ENCODE measurements at regions of chr7 and their contacts with region 1.

Region 1: DNA sequence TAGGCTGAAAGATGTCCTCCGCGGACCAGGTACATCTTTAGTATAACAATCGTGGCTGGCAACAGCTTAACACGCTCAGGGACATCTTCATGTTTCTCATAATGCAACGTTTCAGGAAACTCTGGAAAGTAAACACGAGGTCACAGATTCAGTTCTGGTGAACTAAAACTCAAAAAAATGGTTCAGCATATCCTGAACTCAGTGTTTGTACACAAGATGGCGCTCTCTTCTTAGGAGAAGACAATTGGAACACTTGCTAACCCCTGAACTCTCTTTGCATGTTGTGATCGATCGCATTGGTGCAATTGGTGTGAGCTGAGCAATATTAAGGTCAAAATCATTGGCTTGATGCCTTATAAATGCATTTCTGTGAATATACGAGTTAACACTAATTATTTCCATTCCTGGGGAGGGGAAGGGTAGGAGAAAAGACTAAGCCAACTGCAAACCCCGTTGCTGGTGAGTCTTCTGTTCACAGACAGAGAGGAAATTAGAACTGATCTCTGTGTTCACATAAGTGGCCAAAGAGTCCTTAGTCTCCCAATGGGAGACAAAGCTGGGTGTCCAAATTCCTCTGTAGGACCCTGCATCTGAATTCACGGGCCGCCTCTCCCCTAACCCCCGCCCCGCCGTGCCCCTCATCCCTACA is 52.6 kb upstream of the FAM180A start:
- DNase-seq: peak; percentile 62 to 66
- H3K4me3 ChIP-seq: no peak overlapping the region
- H3K4me1 ChIP-seq: no peaks in the 10 kb centered on the region
- H3K27me3 ChIP-seq: no peaks in the 10 kb centered on the region

Region 2: GRCh38 chr7:135930565-135931461 is 129.6 kb after region 1 on chr7:
- in situ Hi-C with region 1: no loop called
- DNase-seq: peak; percentile 22 to 71
- H3K4me3 ChIP-seq: no peak overlapping the region
- H3K4me1 ChIP-seq: peaks cover 14% of the 10 kb centered on the region
- H3K27me3 ChIP-seq: no peaks in the 10 kb centered on the region

Region 3: DNA sequence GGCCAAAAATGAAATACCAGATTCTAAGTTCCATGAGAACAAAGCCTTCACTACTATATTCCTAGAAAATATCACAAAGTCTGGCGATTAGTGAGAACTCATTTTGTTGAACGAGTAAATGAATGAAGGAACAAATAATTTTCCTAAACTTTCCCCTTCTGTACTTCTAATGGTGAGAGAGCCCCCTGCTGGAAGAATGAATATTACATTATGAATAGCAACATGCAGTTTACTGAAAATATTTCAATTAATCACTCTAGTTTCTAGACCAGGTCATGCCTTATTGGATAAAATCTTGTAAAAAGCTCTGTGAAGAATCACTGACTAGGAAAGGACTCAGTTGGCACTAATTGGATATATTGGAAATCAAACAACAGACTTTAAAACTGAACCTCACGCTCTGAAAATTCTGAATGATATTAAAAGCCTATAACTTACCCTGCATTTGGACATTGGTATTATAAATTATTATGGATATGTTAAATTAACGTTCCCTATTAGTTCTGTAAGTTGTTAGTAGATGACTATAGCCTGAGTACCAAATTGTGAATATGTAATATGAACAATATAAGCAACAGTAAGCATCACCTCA is 208.4 kb after region 1 on chr7:
- in situ Hi-C with region 1: loop called (anchors 5 kb)
- DNase-seq: peak in 1 of 2 experiments; percentile 44
- H3K4me3 ChIP-seq: no peak overlapping the region
- H3K4me1 ChIP-seq: no peaks in the 10 kb centered on the region
- H3K27me3 ChIP-seq: peaks cover 3% of the 10 kb centered on the region

Measured in HAP-1 (cell line).